Cardiac septum (tissue), 1 donor: ENCODE measurements at regions of chr6 and their contacts with region 1.

Region 1: GRCh38 chr6:155143029-155143577 is 120.7 kb upstream of the CLDN20 start:
- DNase-seq: no peak

Region 2: GRCh38 chr6:155062866-155063341 is 80.2 kb before region 1 on chr6:
- intact Hi-C with region 1: no loop called
- DNase-seq: no peak

Region 3: GRCh38 chr6:155106456-155107115 is 36.5 kb before region 1 on chr6:
- intact Hi-C with region 1: loop called (anchors 5 kb)
- DNase-seq: no peak

Region 4: GRCh38 chr6:155216312-155217046 is 73.4 kb after region 1 on chr6:
- intact Hi-C with region 1: no loop called
- DNase-seq: no peak